CD8-positive, alpha-beta T cell (primary cell): ENCODE measurements at regions of chr11 and their contacts with region 1.

Region 1: DNA sequence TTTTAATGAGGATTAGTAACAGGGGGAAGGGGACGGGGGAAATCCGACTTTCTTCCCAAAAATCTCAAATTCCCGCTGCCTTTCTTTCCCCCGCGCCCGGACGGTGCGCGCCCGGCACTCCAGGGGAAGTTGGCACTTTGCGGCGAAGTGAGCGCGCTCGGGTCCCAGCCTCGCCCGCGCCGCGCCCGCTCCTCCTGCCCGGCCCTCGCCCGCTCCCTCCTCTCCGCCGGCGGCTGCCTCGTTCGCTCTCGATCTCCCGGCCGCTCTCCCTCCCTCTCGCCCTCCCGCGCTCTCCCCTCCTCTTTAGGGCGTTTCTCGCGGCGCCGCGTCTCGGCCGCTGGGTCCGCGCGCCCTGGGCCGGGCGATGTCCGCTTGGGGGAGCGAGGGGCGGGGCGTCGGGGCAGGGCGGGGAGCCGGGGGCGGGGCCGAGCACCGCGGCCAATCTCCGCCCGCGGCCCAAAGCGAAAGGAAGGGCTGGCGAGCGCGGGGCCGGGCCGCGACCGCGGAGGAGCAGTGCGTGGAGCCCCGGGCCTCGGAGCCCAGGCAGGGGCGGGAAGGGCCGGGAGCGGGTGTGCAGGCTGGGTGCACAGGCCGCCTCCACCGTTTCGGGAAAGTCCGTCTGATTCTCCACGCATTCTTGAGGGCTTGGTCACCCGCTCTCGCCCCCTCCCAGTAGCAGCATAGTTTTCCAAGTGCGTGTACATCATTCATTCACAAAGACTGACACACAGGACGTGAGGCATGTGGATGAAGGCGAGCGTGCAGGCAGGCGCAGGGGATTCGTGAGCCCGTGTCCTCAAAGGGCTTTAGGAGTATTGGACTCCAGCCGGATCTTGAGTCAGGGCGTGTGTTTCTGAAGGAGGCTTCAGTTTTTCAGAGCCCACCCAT is 65.1 kb downstream of the ETS1 start:
- DNase-seq: peak; percentile 80 to 96 (median 91)
- ATAC-seq: peak; percentile 62
- H3K4me3 ChIP-seq: peak overlapping the region; percentile 94 to 97
- H3K4me3 Mint-ChIP-seq: peak overlapping the region; percentile 98
- H3K27ac ChIP-seq: peak overlapping the region; percentile 86 to 91
- H3K27ac Mint-ChIP-seq: peak overlapping the region; percentile 98
- H3K4me1 ChIP-seq: peaks cover 44% of the 10 kb centered on the region
- H3K4me1 Mint-ChIP-seq: peaks cover 50% of the 10 kb centered on the region
- H3K27me3 ChIP-seq: no peaks in the 10 kb centered on the region
- H3K27me3 Mint-ChIP-seq: no peaks in the 10 kb centered on the region
- CTCF ChIP-seq: no peak

Region 2: GRCh38 chr11:128039140-128040021 is 482.9 kb before region 1 on chr11:
- CTCF ChIA-PET with region 1: no interaction called
- POLR2A ChIA-PET with region 1: interaction called, 3 read pairs
- intact Hi-C with region 1: loop called in 1 of 2 experiments (anchors 10 kb)
- DNase-seq: peak; percentile 48 to 94 (median 79)
- ATAC-seq: peak; percentile 91
- H3K4me3 ChIP-seq: peak overlapping the region; percentile 40 to 50
- H3K4me3 Mint-ChIP-seq: peak overlapping the region; percentile 59
- H3K27ac ChIP-seq: peak overlapping the region; percentile 55 to 80
- H3K27ac Mint-ChIP-seq: peak overlapping the region; percentile 87
- H3K4me1 ChIP-seq: peaks cover 76% of the 10 kb centered on the region
- H3K4me1 Mint-ChIP-seq: peaks cover 56% of the 10 kb centered on the region
- H3K27me3 ChIP-seq: no peaks in the 10 kb centered on the region
- H3K27me3 Mint-ChIP-seq: no peaks in the 10 kb centered on the region
- CTCF ChIP-seq: peak; percentile 22

Region 3: DNA sequence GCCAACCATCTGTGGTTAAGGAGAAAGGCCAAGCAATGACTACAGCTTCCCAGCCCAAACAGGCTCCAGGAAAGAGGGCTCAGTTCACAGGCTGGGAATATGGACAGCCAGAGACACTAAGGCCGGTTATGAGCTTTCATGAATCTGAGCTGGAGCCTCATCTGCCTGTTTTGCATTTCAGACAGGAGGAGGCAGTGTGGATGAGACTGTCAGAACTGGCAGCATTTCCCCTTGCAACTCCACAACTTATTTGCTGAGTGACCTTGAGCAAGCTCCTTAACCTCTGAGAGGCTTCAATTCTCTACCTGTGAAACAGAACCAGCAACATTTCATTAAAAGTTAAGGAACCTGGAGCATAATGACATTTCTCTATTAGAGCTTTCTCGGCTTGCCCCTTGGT is 198.9 kb before region 1 on chr11:
- CTCF ChIA-PET with region 1: interaction called, 13 read pairs
- POLR2A ChIA-PET with region 1: interaction called, 16 read pairs
- intact Hi-C with region 1: loop called in 1 of 2 experiments (anchors 1 kb)
- DNase-seq: peak in 6 of 9 experiments; percentile 13 to 82 (median 60)
- ATAC-seq: no peak
- H3K4me3 ChIP-seq: no peak overlapping the region
- H3K4me3 Mint-ChIP-seq: peak overlapping the region; percentile 16
- H3K27ac ChIP-seq: peak overlapping the region; percentile 87 to 90
- H3K27ac Mint-ChIP-seq: peak overlapping the region; percentile 94
- H3K4me1 ChIP-seq: peaks cover 93% of the 10 kb centered on the region
- H3K4me1 Mint-ChIP-seq: peaks cover 85% of the 10 kb centered on the region
- H3K27me3 ChIP-seq: no peaks in the 10 kb centered on the region
- H3K27me3 Mint-ChIP-seq: no peaks in the 10 kb centered on the region
- CTCF ChIP-seq: peak; percentile 37

Region 4: GRCh38 chr11:128448200-128448886 is 74.0 kb before region 1 on chr11:
- CTCF ChIA-PET with region 1: no interaction called
- POLR2A ChIA-PET with region 1: no interaction called
- intact Hi-C with region 1: no loop called
- DNase-seq: no peak
- ATAC-seq: no peak
- H3K4me3 ChIP-seq: no peak overlapping the region
- H3K4me3 Mint-ChIP-seq: no peak overlapping the region
- H3K27ac ChIP-seq: no peak overlapping the region
- H3K27ac Mint-ChIP-seq: no peak overlapping the region
- H3K4me1 ChIP-seq: peaks cover 11% of the 10 kb centered on the region
- H3K4me1 Mint-ChIP-seq: peaks cover 52% of the 10 kb centered on the region
- H3K27me3 ChIP-seq: no peaks in the 10 kb centered on the region
- H3K27me3 Mint-ChIP-seq: no peaks in the 10 kb centered on the region
- CTCF ChIP-seq: no peak

Region 5: DNA sequence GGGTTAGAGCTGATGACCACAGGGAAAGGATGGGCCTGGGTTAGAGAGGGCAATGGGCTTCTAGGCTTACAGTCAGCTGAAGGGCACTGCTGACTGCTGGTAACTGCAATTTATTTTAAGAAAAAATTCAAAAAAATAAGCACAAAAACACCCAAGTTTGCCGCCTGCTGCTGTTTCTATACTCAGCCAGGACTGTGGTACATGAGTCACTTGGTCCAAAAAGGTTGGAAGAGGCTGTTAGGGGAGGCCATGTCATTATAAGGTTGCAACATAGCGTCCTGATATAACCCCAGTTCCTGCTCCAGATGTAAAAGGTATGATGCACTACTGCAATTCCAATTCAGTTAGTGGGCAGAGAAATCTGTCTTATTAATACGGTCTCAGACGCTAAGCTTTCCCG is 33.8 kb before region 1 on chr11:
- CTCF ChIA-PET with region 1: interaction called, 4 read pairs
- POLR2A ChIA-PET with region 1: interaction called, 107 read pairs
- intact Hi-C with region 1: no loop called
- DNase-seq: peak in 1 of 9 experiments; percentile 49
- ATAC-seq: peak; percentile 54
- H3K4me3 ChIP-seq: no peak overlapping the region
- H3K4me3 Mint-ChIP-seq: peak overlapping the region; percentile 55
- H3K27ac ChIP-seq: peak overlapping the region; percentile 12 to 61
- H3K27ac Mint-ChIP-seq: peak overlapping the region; percentile 89
- H3K4me1 ChIP-seq: peaks cover 97% of the 10 kb centered on the region
- H3K4me1 Mint-ChIP-seq: peaks cover 96% of the 10 kb centered on the region
- H3K27me3 ChIP-seq: no peaks in the 10 kb centered on the region
- H3K27me3 Mint-ChIP-seq: no peaks in the 10 kb centered on the region
- CTCF ChIP-seq: no peak

Region 6: DNA sequence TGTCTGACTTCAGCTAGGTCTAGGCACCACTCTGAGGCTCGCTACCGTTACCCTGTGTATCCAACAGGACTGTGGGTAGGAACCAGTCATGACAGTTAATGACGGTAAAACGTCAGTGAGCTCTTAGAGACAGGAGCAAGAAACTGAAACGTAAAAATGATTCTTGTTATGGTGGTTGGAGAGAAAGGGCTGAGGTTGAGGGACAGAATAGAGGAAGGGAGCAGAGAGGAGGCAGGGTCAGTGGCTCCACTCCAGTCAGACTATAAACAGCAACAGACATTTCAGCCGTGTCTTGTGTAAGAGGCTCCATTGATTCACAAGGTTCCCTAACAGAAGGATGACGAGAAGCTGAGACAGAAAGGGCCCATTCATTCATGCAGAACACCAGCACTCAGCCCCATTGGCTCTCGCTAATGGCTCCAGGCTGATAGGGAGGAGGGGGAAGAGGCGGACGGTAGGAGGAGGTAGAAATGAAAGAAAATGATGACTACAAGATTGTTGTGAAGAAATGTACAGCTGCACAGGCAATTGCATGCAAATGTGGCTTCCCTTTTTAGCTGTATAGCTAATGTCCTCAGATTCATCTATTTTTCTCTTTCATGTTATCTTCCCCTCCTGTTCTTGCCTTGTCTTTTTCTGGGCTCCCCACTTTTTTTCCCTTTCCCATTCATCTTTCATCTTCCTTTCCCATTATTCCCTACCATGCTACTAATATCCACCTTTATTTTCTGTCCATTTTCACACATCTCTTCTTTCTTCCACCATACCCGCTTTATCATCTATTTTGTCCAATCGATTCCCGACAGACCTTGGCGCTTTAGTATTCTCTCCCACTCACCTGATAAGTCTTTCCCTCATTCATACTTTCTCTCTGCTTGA is 30.7 kb after region 1 on chr11:
- CTCF ChIA-PET with region 1: interaction called, 4 read pairs
- POLR2A ChIA-PET with region 1: interaction called, 9 read pairs
- intact Hi-C with region 1: loop called (anchors 1 to 2 kb)
- DNase-seq: peak in 2 of 9 experiments; percentile 25 to 54
- ATAC-seq: no peak
- H3K4me3 ChIP-seq: no peak overlapping the region
- H3K4me3 Mint-ChIP-seq: peak overlapping the region; percentile 38
- H3K27ac ChIP-seq: peak overlapping the region; percentile 2 to 86
- H3K27ac Mint-ChIP-seq: peak overlapping the region; percentile 91
- H3K4me1 ChIP-seq: peaks cover 59% of the 10 kb centered on the region
- H3K4me1 Mint-ChIP-seq: peaks cover 60% of the 10 kb centered on the region
- H3K27me3 ChIP-seq: no peaks in the 10 kb centered on the region
- H3K27me3 Mint-ChIP-seq: no peaks in the 10 kb centered on the region
- CTCF ChIP-seq: no peak

Region 7: GRCh38 chr11:128725630-128726319 is 203.5 kb after region 1 on chr11:
- CTCF ChIA-PET with region 1: no interaction called
- POLR2A ChIA-PET with region 1: interaction called, 3 read pairs
- intact Hi-C with region 1: loop called in 1 of 2 experiments (anchors 10 kb)
- DNase-seq: peak; percentile 19 to 95 (median 67)
- ATAC-seq: peak; percentile 56
- H3K4me3 ChIP-seq: peak overlapping the region; percentile 16 to 25
- H3K4me3 Mint-ChIP-seq: peak overlapping the region; percentile 87
- H3K27ac ChIP-seq: peak overlapping the region; percentile 6 to 69
- H3K27ac Mint-ChIP-seq: peak overlapping the region; percentile 89
- H3K4me1 ChIP-seq: peaks cover 99% of the 10 kb centered on the region
- H3K4me1 Mint-ChIP-seq: peaks cover 98% of the 10 kb centered on the region
- H3K27me3 ChIP-seq: no peaks in the 10 kb centered on the region
- H3K27me3 Mint-ChIP-seq: no peaks in the 10 kb centered on the region
- CTCF ChIP-seq: no peak